Naive thymus-derived CD4-positive, alpha-beta T cell (primary cell): ENCODE measurements at regions of chr6 and their contacts with region 1.

Region 1: GRCh38 chr6:2900821-2901644 is 2.1 kb downstream of the SERPINB9 start:
- DNase-seq: no peak
- ATAC-seq: no peak
- H3K4me3 ChIP-seq: peak overlapping the region; percentile 85
- H3K4me3 Mint-ChIP-seq: peak overlapping the region; percentile 96 to 100 (median 99)
- H3K27ac ChIP-seq: peak overlapping the region; percentile 90
- H3K27ac Mint-ChIP-seq: peak overlapping the region; percentile 88 to 98 (median 97)
- H3K4me1 ChIP-seq: peaks cover 29 to 33% of the 10 kb centered on the region in 2 donors
- H3K4me1 Mint-ChIP-seq: peaks cover 54 to 71% (median 66%) of the 10 kb centered on the region in 7 donors
- H3K27me3 ChIP-seq: no peaks in the 10 kb centered on the region
- H3K27me3 Mint-ChIP-seq: peaks cover 0 to 4% (median 0%) of the 10 kb centered on the region in 5 donors

Region 2: DNA sequence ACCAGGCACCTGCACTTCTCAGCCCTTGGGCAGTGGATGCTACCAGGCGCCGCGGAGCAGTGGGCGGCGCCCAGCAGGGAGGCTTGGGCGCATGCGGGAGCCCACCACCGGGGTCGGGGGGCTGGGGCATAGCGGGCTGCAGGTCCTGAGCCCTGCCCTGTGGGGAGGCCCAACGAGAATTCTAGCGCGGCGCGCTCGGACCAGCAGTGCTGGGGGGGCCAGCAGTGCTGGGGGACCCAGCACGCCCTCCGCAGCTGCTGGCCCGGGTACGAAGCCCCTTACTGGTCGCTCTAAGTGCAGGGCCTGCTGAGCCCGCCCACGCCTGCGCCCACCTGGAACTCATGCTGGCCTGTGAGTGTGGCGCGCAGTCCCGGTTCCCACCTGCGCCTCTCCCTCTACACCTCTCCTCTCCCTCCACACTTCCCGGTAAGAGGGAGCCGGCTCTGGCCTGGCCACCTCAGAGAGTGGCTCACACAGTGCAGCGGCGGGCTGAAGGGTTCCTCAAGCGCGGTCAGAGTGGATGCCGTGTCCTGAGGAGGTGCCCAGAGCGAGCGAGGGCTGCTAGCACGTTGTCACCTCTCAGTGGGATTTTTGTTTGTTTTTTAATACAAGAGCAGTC is 30.9 kb before region 1 on chr6:
- CTCF ChIA-PET with region 1: interaction called, 3 read pairs
- POLR2A ChIA-PET with region 1: interaction called, 18 read pairs
- intact Hi-C with region 1: no loop called
- DNase-seq: no peak
- ATAC-seq: no peak
- H3K4me3 ChIP-seq: no peak overlapping the region
- H3K4me3 Mint-ChIP-seq: no peak overlapping the region
- H3K27ac ChIP-seq: no peak overlapping the region
- H3K27ac Mint-ChIP-seq: no peak overlapping the region
- H3K4me1 ChIP-seq: peaks cover 7 to 11% of the 10 kb centered on the region in 2 donors
- H3K4me1 Mint-ChIP-seq: peaks cover 16 to 60% (median 47%) of the 10 kb centered on the region in 7 donors
- H3K27me3 ChIP-seq: no peaks in the 10 kb centered on the region
- H3K27me3 Mint-ChIP-seq: no peaks in the 10 kb centered on the region

Region 3: DNA sequence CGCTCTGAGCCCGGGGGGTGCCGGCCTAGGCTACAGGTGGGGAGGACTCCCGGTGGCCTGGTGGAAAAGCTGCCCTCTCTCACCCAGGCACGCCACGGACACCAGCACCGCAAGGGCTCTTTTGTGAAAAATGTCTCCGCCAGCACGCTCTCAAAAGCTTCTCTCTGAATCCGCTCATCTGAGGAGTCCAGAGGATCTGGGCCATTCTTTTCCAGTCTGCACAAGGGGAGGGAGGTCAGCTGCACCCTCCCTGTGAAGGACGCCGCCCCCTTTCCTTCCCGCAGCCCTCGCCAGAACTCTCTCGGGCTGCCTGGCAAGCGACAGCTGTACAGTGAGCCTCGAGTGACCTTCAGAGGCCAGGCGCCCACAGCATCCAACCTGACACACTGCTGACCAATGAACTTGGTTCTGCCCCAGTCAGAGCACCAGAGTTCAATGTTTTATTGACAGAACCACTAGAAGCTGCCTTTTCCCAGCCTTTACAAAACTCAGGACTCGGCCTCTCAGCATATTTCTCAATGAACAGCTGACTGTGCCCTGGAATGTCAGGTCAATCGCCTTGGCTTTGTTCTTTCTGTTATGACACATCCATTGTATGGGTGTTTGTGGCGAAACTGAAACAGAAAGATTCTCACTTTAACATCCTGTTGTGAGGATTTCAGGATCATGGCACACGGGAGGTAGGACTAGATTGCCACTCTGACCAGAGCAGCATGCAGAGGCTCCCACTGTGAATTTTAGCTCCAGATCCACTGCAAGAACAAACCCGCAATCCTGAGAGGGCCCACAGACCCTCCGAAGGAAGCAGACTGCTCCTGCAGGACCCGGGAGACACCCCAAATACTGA is 24.6 kb before region 1 on chr6:
- CTCF ChIA-PET with region 1: interaction called, 4 read pairs
- POLR2A ChIA-PET with region 1: interaction called, 14 read pairs
- intact Hi-C with region 1: loop called (anchors 1 to 2 kb)
- DNase-seq: no peak
- ATAC-seq: peak; percentile 38
- H3K4me3 ChIP-seq: peak overlapping the region; percentile 50
- H3K4me3 Mint-ChIP-seq: peak overlapping the region; percentile 79 to 87 (median 84)
- H3K27ac ChIP-seq: peak overlapping the region; percentile 71
- H3K27ac Mint-ChIP-seq: peak overlapping the region; percentile 82 to 98 (median 91)
- H3K4me1 ChIP-seq: peaks cover 54 to 55% of the 10 kb centered on the region in 2 donors
- H3K4me1 Mint-ChIP-seq: peaks cover 63 to 83% (median 79%) of the 10 kb centered on the region in 7 donors
- H3K27me3 ChIP-seq: no peaks in the 10 kb centered on the region
- H3K27me3 Mint-ChIP-seq: no peaks in the 10 kb centered on the region

Region 4: GRCh38 chr6:2885967-2886735 is 14.9 kb before region 1 on chr6:
- CTCF ChIA-PET with region 1: no interaction called
- POLR2A ChIA-PET with region 1: interaction called, 15 read pairs
- intact Hi-C with region 1: loop called (anchors 2 kb)
- DNase-seq: no peak
- ATAC-seq: peak; percentile 58
- H3K4me3 ChIP-seq: no peak overlapping the region
- H3K4me3 Mint-ChIP-seq: peak overlapping the region in 5 of 10 donors; percentile 0 to 28 (median 16)
- H3K27ac ChIP-seq: peak overlapping the region; percentile 23
- H3K27ac Mint-ChIP-seq: peak overlapping the region in 8 of 9 donors; percentile 39 to 90 (median 70)
- H3K4me1 ChIP-seq: peaks cover 3 to 24% of the 10 kb centered on the region in 2 donors
- H3K4me1 Mint-ChIP-seq: peaks cover 30 to 85% (median 74%) of the 10 kb centered on the region in 7 donors
- H3K27me3 ChIP-seq: no peaks in the 10 kb centered on the region
- H3K27me3 Mint-ChIP-seq: no peaks in the 10 kb centered on the region